ENCODE measurements at regions of chr15 and their contacts with region 1.

Region 1: GRCh38 chr15:74322181-74323076 is 45.0 kb downstream of the CYP11A1 start:
- DNase-seq: peak; percentile 82
- H3K27ac ChIP-seq: no peak overlapping the region
- CTCF ChIP-seq: peak; percentile 94

Region 2: DNA sequence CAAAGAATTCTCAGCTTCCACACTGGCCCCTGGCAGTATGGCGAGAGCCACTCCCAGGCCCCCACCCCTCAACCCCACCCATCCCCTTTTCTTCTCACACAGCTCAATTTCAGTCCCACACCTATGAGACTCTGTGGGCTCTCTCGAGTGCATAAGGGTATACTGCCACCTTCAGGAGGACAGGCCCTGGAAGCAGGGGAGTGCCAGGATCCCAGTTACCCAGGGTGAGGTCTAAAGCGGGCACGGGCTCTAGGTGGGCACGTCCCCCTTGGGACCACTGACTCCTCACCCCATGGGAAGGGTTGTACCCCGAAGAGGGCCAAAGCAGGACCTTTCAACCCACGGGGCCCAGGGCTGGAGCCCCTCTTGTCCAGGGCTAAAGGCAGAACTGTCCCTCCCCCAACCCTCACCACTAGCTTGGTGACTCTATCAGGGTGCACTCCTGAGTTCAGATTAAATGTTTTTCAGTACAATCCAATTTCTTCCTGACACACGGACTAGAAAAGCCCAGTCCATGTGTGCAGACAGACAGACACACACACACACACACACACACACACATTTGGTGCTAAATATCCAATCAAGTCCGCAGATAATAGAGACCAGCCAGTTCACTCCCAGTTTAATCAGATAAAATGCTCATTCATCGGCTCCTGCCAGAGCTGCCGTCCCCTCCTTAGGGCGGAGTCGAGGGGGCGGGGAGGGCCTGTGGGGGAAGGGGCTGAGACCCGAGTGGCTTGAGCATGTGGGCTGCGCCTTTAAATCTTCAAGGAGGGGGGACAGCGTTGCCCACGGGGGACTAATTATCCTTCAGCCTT is 14.4 kb before region 1 on chr15:
- CTCF ChIA-PET with region 1: interaction called, 29 read pairs
- POLR2A ChIA-PET with region 1: no interaction called
- DNase-seq: peak; percentile 84
- H3K27ac ChIP-seq: no peak overlapping the region
- CTCF ChIP-seq: peak; percentile 76

Measured in RWPE1 (cell line).